Activated CD8-positive, alpha-beta T cell treated with anti-CD3 and anti-CD28 coated beads for 36 hours (primary cell): ENCODE measurements at regions of chr2 and their contacts with region 1.

Region 1: GRCh38 chr2:68282811-68283418 is 30.6 kb upstream of the PPP3R1 start:
- DNase-seq: peak; percentile 16
- ATAC-seq: peak; percentile 67
- H3K4me3 Mint-ChIP-seq: no peak overlapping the region
- H3K27ac Mint-ChIP-seq: no peak overlapping the region
- H3K4me1 Mint-ChIP-seq: no peaks in the 10 kb centered on the region
- H3K27me3 Mint-ChIP-seq: peaks cover 24% of the 10 kb centered on the region
- CTCF ChIP-seq: peak; percentile 80

Region 2: DNA sequence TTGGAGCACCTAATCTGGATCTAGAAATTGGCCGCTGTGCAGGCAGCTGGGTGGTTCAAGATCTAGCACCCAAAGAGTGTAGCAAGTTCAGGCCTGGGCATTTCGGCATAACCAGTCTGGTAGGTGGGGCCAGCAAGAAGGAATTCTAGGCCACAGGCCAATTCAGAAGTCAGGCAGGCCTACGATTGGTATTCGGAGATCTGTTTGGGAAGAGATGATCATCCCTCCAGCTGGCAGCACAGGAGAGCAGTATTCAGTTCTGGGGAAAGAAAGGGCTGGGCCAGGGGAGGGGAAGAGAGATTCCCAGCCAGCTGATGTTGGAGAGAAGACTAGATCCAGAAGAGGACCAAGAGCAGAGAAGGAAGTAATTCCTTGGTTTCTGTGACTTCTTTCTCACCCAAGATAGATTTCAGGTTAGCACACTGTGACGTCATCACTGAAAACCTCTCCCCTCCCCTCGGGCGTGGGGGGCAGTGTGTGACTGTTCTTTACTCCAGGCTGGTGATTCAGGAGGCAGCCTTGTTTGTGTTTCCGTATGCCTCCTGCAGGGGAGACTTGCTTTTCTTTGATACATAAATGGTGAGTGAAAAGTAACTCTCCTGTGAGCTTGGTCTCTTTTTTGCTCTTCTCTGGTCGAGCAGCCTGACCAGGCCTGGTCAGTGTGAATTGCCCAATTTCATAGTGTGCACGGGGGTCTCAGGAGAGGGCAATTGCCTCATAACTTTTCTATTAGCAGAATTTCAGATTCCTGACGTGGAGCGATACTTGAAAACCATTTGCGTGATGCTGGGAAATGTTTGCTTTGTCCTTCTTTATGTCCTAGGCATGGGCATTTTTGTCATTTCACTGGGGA is 1786.9 kb before region 1 on chr2:
- CTCF ChIA-PET with region 1: no interaction called
- POLR2A ChIA-PET with region 1: no interaction called
- intact Hi-C with region 1: no loop called
- DNase-seq: no peak
- ATAC-seq: no peak
- H3K4me3 Mint-ChIP-seq: no peak overlapping the region
- H3K27ac Mint-ChIP-seq: no peak overlapping the region
- H3K4me1 Mint-ChIP-seq: no peaks in the 10 kb centered on the region
- H3K27me3 Mint-ChIP-seq: no peaks in the 10 kb centered on the region
- CTCF ChIP-seq: no peak

Region 3: GRCh38 chr2:68115965-68116364 is 166.9 kb before region 1 on chr2:
- CTCF ChIA-PET with region 1: interaction called, 10 read pairs
- POLR2A ChIA-PET with region 1: no interaction called
- intact Hi-C with region 1: no loop called
- DNase-seq: no peak
- ATAC-seq: no peak
- H3K4me3 Mint-ChIP-seq: no peak overlapping the region
- H3K27ac Mint-ChIP-seq: no peak overlapping the region
- H3K4me1 Mint-ChIP-seq: no peaks in the 10 kb centered on the region
- H3K27me3 Mint-ChIP-seq: no peaks in the 10 kb centered on the region
- CTCF ChIP-seq: no peak

Region 4: DNA sequence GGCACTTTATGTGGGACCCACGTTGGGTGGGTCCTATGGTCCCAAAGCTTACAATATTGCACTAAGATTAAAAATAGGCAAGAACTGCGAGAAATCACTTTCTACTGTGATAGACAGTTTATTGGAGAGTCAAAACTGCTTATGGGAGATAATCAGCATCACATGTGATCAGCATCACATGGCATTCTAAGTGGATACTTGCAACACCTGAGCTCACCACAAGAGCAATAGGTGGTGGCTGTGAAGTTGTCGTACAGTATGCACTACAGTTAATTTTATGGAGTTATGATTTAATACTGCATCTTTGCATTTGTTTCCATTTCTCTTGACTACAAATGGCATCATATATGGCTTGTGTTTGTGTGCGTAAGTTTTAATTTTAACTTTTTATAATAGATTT is 113.6 kb before region 1 on chr2:
- CTCF ChIA-PET with region 1: interaction called, 14 read pairs
- POLR2A ChIA-PET with region 1: no interaction called
- intact Hi-C with region 1: no loop called
- DNase-seq: no peak
- ATAC-seq: no peak
- H3K4me3 Mint-ChIP-seq: no peak overlapping the region
- H3K27ac Mint-ChIP-seq: no peak overlapping the region
- H3K4me1 Mint-ChIP-seq: peaks cover 11% of the 10 kb centered on the region
- H3K27me3 Mint-ChIP-seq: no peaks in the 10 kb centered on the region
- CTCF ChIP-seq: no peak

Region 5: DNA sequence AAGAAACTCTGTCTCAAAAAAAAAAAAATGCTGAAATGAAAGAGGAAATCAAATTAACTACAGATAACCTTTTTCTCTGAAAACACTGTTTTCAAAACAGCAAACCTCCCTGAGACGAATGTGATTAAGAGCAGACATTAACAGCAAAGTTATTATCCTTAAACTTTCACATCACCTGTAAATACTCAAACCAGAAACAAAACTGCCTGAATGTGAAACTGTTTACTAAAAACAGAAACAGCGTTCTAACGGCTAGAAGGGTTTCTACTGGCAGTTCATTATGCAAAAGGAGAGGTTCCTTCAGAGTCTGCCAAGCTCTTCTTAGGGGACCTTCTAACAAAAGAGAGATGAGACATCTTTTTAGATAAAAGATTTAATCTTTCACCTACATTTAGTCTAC is 79.3 kb before region 1 on chr2:
- CTCF ChIA-PET with region 1: interaction called, 11 read pairs
- POLR2A ChIA-PET with region 1: no interaction called
- intact Hi-C with region 1: no loop called
- DNase-seq: no peak
- ATAC-seq: peak; percentile 87
- H3K4me3 Mint-ChIP-seq: peak overlapping the region; percentile 22
- H3K27ac Mint-ChIP-seq: peak overlapping the region; percentile 89
- H3K4me1 Mint-ChIP-seq: peaks cover 72% of the 10 kb centered on the region
- H3K27me3 Mint-ChIP-seq: no peaks in the 10 kb centered on the region
- CTCF ChIP-seq: no peak

Region 6: GRCh38 chr2:68251187-68251854 is 31.6 kb before region 1 on chr2:
- CTCF ChIA-PET with region 1: interaction called, 10 read pairs
- POLR2A ChIA-PET with region 1: no interaction called
- intact Hi-C with region 1: no loop called
- DNase-seq: peak; percentile 82
- ATAC-seq: peak; percentile 70
- H3K4me3 Mint-ChIP-seq: peak overlapping the region; percentile 87
- H3K27ac Mint-ChIP-seq: peak overlapping the region; percentile 98
- H3K4me1 Mint-ChIP-seq: peaks cover 31% of the 10 kb centered on the region
- H3K27me3 Mint-ChIP-seq: no peaks in the 10 kb centered on the region
- CTCF ChIP-seq: peak; percentile 64

Region 7: GRCh38 chr2:68272246-68272994 is 10.5 kb before region 1 on chr2:
- CTCF ChIA-PET with region 1: interaction called, 14 read pairs
- POLR2A ChIA-PET with region 1: interaction called, 3 read pairs
- intact Hi-C with region 1: no loop called
- DNase-seq: no peak
- ATAC-seq: no peak
- H3K4me3 Mint-ChIP-seq: no peak overlapping the region
- H3K27ac Mint-ChIP-seq: no peak overlapping the region
- H3K4me1 Mint-ChIP-seq: no peaks in the 10 kb centered on the region
- H3K27me3 Mint-ChIP-seq: peaks cover 9% of the 10 kb centered on the region
- CTCF ChIP-seq: no peak

Region 8: GRCh38 chr2:68295516-68295915 is 12.6 kb after region 1 on chr2:
- CTCF ChIA-PET with region 1: interaction called, 50 read pairs
- POLR2A ChIA-PET with region 1: interaction called, 4 read pairs
- intact Hi-C with region 1: no loop called
- DNase-seq: no peak
- ATAC-seq: no peak
- H3K4me3 Mint-ChIP-seq: no peak overlapping the region
- H3K27ac Mint-ChIP-seq: no peak overlapping the region
- H3K4me1 Mint-ChIP-seq: no peaks in the 10 kb centered on the region
- H3K27me3 Mint-ChIP-seq: peaks cover 7% of the 10 kb centered on the region
- CTCF ChIP-seq: no peak